H1 (cell line): ENCODE measurements at regions of chr12 and their contacts with region 1.

Region 1: DNA sequence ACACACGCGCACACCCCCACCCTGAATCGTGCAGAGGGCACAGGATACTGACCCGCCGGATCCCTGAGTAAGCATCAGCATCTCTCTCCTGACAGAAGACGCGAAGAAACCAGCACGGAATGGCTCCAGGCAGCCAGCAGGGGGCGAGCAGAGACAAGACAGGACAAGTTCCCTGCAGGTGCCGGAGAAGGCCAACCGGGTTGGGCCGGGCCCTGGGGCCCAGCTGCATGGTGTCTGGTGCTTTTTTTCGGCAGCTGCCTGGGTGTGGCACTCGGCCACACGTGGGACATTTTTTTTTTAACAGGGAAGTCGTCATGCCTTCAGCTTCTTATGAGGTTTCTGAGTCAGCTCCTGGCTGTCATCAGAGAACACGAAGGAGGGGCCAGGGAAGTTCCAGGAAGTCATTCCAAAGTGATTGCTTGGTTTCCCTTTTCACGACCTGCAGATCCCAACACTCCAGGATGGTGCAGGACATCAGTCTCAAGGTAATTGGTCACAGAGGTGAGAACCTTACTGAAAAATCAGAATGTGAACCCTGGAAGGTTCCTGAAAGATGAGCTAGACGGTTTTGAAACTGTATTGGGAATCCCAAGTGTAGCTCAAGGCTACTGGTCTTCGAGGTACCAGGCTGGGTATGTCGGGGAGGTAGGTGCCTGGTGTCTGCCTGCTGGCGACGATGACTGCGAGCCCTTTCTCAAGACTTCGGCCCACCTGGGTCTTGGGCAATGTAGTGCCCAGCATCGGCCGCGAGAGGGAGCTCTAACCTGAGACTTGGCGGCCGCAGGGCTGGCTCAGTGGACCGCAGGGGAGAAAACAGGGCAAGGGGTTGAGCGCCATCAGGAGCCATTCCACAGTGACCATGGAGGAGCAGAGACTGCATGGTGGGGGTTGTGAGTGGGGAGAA is 190.8 kb upstream of the PRMT8 start:
- DNase-seq: peak; percentile 85 to 93
- H3K4me3 ChIP-seq: peak overlapping the region in 3 of 4 experiments; percentile 7 to 42 (median 11); a peak in 3 of 8 replicates
- H3K27ac ChIP-seq: no peak overlapping the region
- H3K4me1 ChIP-seq: peaks cover 0 to 13% (median 4%) of the 10 kb centered on the region in 4 experiments; a peak in 5 of 7 replicates
- H3K27me3 ChIP-seq: peaks cover 0 to 4% (median 2%) of the 10 kb centered on the region in 4 experiments; a peak in 2 of 7 replicates
- CTCF ChIP-seq: peak in 2 of 3 experiments; percentile 97 to 98; a peak in 3 of 4 replicates
- EP300 ChIP-seq: peak in 1 of 2 experiments; percentile 33; a peak in 1 of 3 replicates
- POLR2A ChIP-seq: no peak
- RAD21 ChIP-seq: peak; percentile 93 to 98

Region 2: GRCh38 chr12:3135522-3136461 is 164.4 kb before region 1 on chr12:
- CTCF ChIA-PET with region 1: interaction called, 14 read pairs
- POLR2A ChIA-PET with region 1: no interaction called
- DNase-seq: peak; percentile 58 to 63
- H3K4me3 ChIP-seq: no peak overlapping the region
- H3K27ac ChIP-seq: no peak overlapping the region
- H3K4me1 ChIP-seq: peaks cover 2 to 32% (median 20%) of the 10 kb centered on the region in 4 experiments
- H3K27me3 ChIP-seq: no peaks in the 10 kb centered on the region
- CTCF ChIP-seq: peak in 2 of 3 experiments; percentile 88 to 93; a peak in 3 of 4 replicates
- EP300 ChIP-seq: no peak
- POLR2A ChIP-seq: no peak
- RAD21 ChIP-seq: peak; percentile 97 to 99

Region 3: GRCh38 chr12:3275171-3276041 is 24.8 kb before region 1 on chr12:
- CTCF ChIA-PET with region 1: interaction called, 42 read pairs
- POLR2A ChIA-PET with region 1: no interaction called
- DNase-seq: peak; percentile 23 to 97
- H3K4me3 ChIP-seq: 0 out of 8 replicates have a peak overlapping the region, but pooled peaks of 1 of the 4 experiments have one; percentile 20
- H3K27ac ChIP-seq: no peak overlapping the region
- H3K4me1 ChIP-seq: peaks cover 0 to 15% (median 7%) of the 10 kb centered on the region in 4 experiments
- H3K27me3 ChIP-seq: no peaks in the 10 kb centered on the region
- CTCF ChIP-seq: peak in 2 of 3 experiments; percentile 95 to 96; a peak in 3 of 4 replicates
- EP300 ChIP-seq: no peak
- POLR2A ChIP-seq: no peak
- RAD21 ChIP-seq: peak; percentile 92 to 96

Region 4: DNA sequence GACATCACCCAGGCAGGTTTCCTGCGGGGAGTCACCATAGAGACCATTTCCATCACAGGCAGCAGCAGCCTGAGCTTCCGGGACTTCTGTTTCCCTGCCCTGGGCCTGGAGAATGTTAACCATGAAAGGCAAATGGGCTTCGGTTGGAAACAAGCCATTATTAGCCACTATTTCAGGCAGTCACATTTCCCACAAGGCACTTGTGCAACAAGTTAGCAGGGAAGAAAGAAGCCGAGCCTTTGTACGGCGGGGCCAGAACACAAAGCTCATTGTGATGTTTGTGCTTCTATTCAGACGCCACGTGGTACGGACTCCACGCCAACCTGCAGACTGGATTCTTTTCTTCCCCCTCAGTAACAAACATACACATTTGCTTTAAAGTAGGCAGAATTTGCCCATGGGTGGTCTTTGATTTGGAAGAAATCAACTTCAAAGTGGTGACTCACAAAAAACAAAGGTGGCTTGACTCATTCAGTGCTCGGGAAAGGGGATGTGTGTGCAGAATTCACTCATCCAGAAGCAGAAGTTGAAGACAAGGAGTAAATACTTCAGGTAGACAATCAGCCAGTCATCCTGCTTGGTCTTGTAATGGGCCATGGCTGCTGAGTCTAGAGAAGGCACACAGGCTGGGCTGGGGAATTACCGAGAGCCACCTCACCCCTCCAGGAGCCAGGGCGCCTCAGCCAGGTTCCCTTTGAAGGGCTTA is 36.6 kb after region 1 on chr12:
- CTCF ChIA-PET with region 1: interaction called, 41 read pairs
- POLR2A ChIA-PET with region 1: no interaction called
- DNase-seq: no peak
- H3K4me3 ChIP-seq: no peak overlapping the region
- H3K27ac ChIP-seq: no peak overlapping the region
- H3K4me1 ChIP-seq: peaks cover 4 to 19% (median 8%) of the 10 kb centered on the region in 4 experiments
- H3K27me3 ChIP-seq: peaks cover 0 to 1% (median 0%) of the 10 kb centered on the region in 4 experiments; a peak in 1 of 7 replicates
- CTCF ChIP-seq: no peak
- EP300 ChIP-seq: no peak
- POLR2A ChIP-seq: no peak
- RAD21 ChIP-seq: no peak

Region 5: DNA sequence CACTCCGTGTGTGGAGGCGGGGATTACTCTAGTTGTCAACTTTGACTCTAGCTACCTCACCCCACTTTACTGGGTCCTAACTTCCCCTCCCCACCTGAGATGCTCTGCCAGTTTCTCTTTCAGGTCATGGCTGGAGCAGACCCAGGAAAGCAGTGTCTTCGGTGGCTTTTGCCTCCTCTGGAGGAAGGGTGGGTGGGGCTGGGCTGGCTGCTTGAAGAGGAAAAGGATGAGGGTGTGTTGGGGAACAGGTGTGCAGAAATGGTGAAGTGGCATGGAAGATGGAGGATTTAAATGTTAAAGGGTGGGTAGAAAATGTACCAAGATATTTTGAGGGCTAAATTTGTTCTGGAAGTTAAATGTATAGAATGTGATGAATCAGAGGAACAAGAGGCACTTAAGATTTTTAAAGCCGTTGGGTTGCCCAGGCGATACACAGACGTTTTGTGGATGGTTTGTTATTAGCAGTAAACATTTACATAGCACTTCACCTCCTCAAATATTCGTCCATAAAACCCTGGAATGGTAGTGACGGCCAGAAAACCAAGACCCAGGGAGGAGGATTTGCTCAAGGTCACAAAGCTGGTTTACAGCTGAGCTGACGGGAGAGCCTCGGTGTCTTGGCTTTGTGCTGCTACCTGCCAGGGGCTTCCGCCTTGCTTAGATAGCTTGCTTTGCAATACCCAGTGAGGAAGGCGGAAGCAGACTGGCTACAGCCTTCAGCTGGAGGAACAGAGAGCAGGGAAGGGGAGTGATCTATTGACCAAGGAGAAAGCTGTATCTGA is 118.6 kb after region 1 on chr12:
- CTCF ChIA-PET with region 1: interaction called, 26 read pairs
- POLR2A ChIA-PET with region 1: no interaction called
- DNase-seq: no peak
- H3K4me3 ChIP-seq: no peak overlapping the region
- H3K27ac ChIP-seq: no peak overlapping the region
- H3K4me1 ChIP-seq: peaks cover 8 to 17% (median 11%) of the 10 kb centered on the region in 4 experiments
- H3K27me3 ChIP-seq: peaks cover 1 to 9% (median 6%) of the 10 kb centered on the region in 4 experiments; a peak in 5 of 7 replicates
- CTCF ChIP-seq: no peak
- EP300 ChIP-seq: no peak
- POLR2A ChIP-seq: no peak
- RAD21 ChIP-seq: no peak

Region 6: DNA sequence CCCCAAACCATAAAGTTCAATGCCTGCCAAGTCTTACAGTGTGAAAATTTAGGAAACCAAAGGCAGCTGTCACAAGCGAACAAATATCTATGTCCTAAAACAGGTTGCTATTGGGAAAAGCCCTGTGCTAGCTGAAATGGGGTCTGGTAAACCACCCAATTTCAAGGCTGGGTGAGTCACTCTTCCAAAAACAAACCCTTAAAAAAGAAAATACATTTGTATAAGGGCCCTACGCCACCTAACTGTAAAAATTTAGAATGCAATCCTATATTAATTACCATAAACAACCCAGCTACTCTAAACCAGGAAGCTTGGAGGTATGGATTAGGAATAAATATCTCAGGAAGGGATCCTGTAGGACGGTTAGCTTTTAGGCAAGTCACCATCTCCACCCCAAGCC is 222.9 kb after region 1 on chr12:
- CTCF ChIA-PET with region 1: interaction called, 17 read pairs
- POLR2A ChIA-PET with region 1: no interaction called
- DNase-seq: peak in 1 of 2 experiments; percentile 24
- H3K4me3 ChIP-seq: no peak overlapping the region
- H3K27ac ChIP-seq: no peak overlapping the region
- H3K4me1 ChIP-seq: no peaks in the 10 kb centered on the region; a peak in 1 of 7 replicates
- H3K27me3 ChIP-seq: no peaks in the 10 kb centered on the region
- CTCF ChIP-seq: no peak
- EP300 ChIP-seq: no peak
- POLR2A ChIP-seq: no peak
- RAD21 ChIP-seq: peak; percentile 22 to 30

Region 7: DNA sequence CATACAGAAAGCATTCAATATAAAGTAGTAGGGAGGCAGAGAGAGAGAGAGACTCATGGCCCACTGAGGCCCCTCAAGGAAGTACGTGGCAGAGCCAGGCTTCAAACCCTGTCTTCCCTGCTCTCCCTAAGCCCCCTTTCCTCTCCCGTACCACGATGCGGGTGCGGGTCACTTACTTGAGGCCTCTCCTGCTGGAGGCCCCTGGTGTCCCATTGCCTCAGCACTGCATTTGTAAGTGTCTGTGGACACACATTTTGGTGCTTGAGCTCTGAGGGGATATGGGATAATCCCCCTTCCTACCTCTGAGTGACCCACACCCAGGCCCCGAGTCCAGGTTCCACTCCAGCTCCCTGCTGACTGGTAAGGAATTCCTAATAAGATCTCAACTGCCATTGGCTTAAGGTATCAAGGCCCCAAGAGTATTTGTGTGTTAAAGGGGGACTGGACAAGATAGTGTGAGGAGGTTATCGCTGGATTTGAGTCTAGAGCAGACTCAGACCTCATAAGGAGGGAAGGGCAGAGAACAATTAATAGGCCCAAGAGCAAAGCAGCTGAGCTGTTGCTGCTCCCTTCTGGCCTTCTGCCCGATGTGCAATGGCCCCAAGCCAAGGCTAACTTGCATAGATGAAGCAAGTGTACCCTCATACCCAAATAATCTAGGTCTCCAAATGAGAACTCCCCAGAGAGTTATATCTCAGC is 380.9 kb after region 1 on chr12:
- CTCF ChIA-PET with region 1: interaction called, 38 read pairs
- POLR2A ChIA-PET with region 1: no interaction called
- DNase-seq: peak in 1 of 2 experiments; percentile 41
- H3K4me3 ChIP-seq: no peak overlapping the region
- H3K27ac ChIP-seq: no peak overlapping the region
- H3K4me1 ChIP-seq: no peaks in the 10 kb centered on the region
- H3K27me3 ChIP-seq: no peaks in the 10 kb centered on the region
- CTCF ChIP-seq: peak; percentile 34 to 52 (median 44); a peak in 3 of 4 replicates
- EP300 ChIP-seq: no peak
- POLR2A ChIP-seq: no peak
- RAD21 ChIP-seq: peak; percentile 63 to 72

Region 8: GRCh38 chr12:4483885-4484823 is 1184.0 kb after region 1 on chr12:
- CTCF ChIA-PET with region 1: no interaction called
- POLR2A ChIA-PET with region 1: no interaction called
- DNase-seq: no peak
- H3K4me3 ChIP-seq: no peak overlapping the region
- H3K27ac ChIP-seq: no peak overlapping the region
- H3K4me1 ChIP-seq: peaks cover 0 to 3% (median 1%) of the 10 kb centered on the region in 4 experiments; a peak in 4 of 7 replicates
- H3K27me3 ChIP-seq: no peaks in the 10 kb centered on the region
- CTCF ChIP-seq: no peak
- EP300 ChIP-seq: no peak
- POLR2A ChIP-seq: no peak
- RAD21 ChIP-seq: no peak